Activated CD4-positive, alpha-beta T cell treated with anti-CD3 and anti-CD28 coated beads, Interleukin-2, amount 10 ng/mL, durations not matched to agents 24 days and 14 days (primary cell): ENCODE measurements at regions of chr6 and their contacts with region 1.

Region 1: DNA sequence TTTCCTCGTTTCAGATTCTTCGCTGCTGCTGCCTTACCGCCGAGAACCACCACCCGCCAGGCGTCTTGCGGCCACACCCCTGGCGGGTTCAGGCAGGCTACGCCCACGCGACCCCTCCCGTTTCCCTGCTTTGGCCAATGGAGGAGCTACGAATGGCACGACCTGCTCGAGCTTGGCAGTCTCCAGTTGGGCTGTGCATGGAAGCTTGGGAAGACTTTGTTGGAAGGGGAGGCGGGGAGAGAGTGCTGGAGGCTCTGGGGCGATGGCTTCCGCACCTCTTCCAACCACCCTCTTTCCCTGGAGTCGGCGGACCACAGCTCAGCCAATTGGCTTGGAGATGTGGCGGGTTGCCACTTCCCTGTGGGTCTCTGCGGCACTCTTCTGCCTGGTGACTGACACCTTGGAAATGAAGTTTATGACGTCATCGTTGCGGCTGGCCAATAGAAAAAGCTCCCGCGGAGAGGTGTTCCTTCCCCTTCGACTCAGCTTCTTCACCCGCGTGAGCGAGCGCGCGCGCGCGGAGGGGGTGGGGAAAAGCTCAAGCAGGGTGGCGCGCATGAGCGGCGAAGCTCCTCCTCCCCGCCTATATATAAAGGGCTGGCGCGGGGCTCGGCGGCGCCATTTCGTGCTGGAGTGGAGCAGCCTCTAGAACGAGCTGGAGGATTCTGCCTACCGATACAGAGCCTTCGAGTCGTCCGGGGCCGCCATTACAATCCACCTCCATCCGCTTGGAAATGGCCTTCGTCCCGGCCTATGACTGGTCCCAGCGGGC is 3.4 kb downstream of the BRD2 start:
- DNase-seq: peak; percentile 100
- H3K4me3 Mint-ChIP-seq: peak overlapping the region; percentile 94
- H3K27ac Mint-ChIP-seq: peak overlapping the region; percentile 100
- H3K4me1 Mint-ChIP-seq: peaks cover 33% of the 10 kb centered on the region
- H3K27me3 Mint-ChIP-seq: no peaks in the 10 kb centered on the region

Region 2: GRCh38 chr6:32195652-32195901 is 776.2 kb before region 1 on chr6:
- intact Hi-C with region 1: loop called (anchors 5 kb)
- DNase-seq: peak; percentile 100
- H3K4me3 Mint-ChIP-seq: peak overlapping the region; percentile 98
- H3K27ac Mint-ChIP-seq: peak overlapping the region; percentile 99
- H3K4me1 Mint-ChIP-seq: peaks cover 40% of the 10 kb centered on the region
- H3K27me3 Mint-ChIP-seq: peaks cover 2% of the 10 kb centered on the region

Region 3: DNA sequence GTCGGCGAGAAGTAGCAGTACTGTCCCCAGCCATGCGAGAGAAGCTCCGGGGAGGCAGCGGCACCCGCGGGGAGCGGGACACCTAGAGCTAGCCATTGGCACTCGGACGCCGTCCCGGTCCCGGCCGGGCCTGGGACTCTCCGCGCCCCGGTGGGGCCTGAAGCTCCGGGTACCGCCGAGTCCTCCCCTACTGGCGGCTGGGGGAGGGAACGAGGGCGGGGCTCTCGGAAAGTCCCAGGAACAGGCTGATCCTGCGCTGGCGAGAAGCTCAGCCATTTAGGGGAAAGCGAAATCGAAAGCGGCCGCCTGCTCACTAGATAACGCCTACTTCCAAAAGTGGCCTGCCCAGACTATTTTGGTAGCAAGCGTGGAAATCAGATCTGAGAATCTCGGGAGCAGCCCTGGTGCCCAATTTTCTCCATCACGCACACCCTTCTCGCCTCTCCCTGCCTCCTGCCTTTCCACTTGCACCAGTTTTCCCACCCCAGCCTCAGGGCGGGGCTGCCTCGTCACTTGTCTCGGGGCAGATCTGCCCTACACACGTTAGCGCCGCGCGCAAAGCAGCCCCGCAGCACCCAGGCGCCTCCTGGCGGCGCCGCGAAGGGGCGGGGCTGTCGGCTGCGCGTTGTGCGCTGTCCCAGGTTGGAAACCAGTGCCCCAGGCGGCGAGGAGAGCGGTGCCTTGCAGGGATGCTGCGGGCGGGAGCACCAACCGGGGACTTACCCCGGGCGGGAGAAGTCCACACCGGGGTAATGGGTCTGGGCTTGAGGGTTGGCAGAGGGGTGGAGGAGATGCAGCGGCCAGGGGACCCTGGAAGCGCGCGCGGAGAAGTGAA is 118.0 kb before region 1 on chr6 and contains the starts of genes PSMB9 and TAP1:
- intact Hi-C with region 1: no loop called
- DNase-seq: peak; percentile 98
- H3K4me3 Mint-ChIP-seq: peak within 1 kb of the TSS; percentile 97
- H3K27ac Mint-ChIP-seq: peak within 1 kb of the TSS; percentile 96
- H3K4me1 Mint-ChIP-seq: peaks cover 59% of the 10 kb centered on the region
- H3K27me3 Mint-ChIP-seq: no peaks in the 10 kb centered on the region
- total RNA-seq, gene PSMB9: 249 and 257 TPM in 2 replicates
- total RNA-seq, gene TAP1: 275 and 283 TPM in 2 replicates

Region 4: GRCh38 chr6:32894080-32895005 is 77.4 kb before region 1 on chr6:
- intact Hi-C with region 1: loop called (anchors 1 kb)
- DNase-seq: peak; percentile 99
- H3K4me3 Mint-ChIP-seq: peak overlapping the region; percentile 99
- H3K27ac Mint-ChIP-seq: peak overlapping the region; percentile 92
- H3K4me1 Mint-ChIP-seq: peaks cover 37% of the 10 kb centered on the region
- H3K27me3 Mint-ChIP-seq: peaks cover 2% of the 10 kb centered on the region

Region 5: GRCh38 chr6:32940656-32941213 is 31.0 kb before region 1 on chr6 and contains the start of gene HLA-DMB:
- intact Hi-C with region 1: loop called (anchors 1 kb)
- DNase-seq: peak; percentile 88
- H3K4me3 Mint-ChIP-seq: peak within 1 kb of the TSS; percentile 81
- H3K27ac Mint-ChIP-seq: peak within 1 kb of the TSS; percentile 84
- H3K4me1 Mint-ChIP-seq: peaks cover 52% of the 10 kb centered on the region
- H3K27me3 Mint-ChIP-seq: peaks cover 5% of the 10 kb centered on the region
- total RNA-seq, gene HLA-DMB: 0.75 and 0.80 TPM in 2 replicates

Region 6: GRCh38 chr6:32984605-32985389 is 13.0 kb after region 1 on chr6:
- intact Hi-C with region 1: loop called (anchors 1 kb)
- DNase-seq: peak; percentile 96
- H3K4me3 Mint-ChIP-seq: no peak overlapping the region
- H3K27ac Mint-ChIP-seq: peak overlapping the region; percentile 22
- H3K4me1 Mint-ChIP-seq: peaks cover 16% of the 10 kb centered on the region
- H3K27me3 Mint-ChIP-seq: peaks cover 4% of the 10 kb centered on the region

Region 7: GRCh38 chr6:33410050-33410710 is 438.4 kb after region 1 on chr6:
- intact Hi-C with region 1: loop called (anchors 2 kb)
- DNase-seq: peak; percentile 99
- H3K4me3 Mint-ChIP-seq: peak overlapping the region; percentile 92
- H3K27ac Mint-ChIP-seq: peak overlapping the region; percentile 91
- H3K4me1 Mint-ChIP-seq: peaks cover 40% of the 10 kb centered on the region
- H3K27me3 Mint-ChIP-seq: no peaks in the 10 kb centered on the region